CD4-positive, alpha-beta memory T cell (primary cell): ENCODE measurements at regions of chr1 and their contacts with region 1.

Region 1: DNA sequence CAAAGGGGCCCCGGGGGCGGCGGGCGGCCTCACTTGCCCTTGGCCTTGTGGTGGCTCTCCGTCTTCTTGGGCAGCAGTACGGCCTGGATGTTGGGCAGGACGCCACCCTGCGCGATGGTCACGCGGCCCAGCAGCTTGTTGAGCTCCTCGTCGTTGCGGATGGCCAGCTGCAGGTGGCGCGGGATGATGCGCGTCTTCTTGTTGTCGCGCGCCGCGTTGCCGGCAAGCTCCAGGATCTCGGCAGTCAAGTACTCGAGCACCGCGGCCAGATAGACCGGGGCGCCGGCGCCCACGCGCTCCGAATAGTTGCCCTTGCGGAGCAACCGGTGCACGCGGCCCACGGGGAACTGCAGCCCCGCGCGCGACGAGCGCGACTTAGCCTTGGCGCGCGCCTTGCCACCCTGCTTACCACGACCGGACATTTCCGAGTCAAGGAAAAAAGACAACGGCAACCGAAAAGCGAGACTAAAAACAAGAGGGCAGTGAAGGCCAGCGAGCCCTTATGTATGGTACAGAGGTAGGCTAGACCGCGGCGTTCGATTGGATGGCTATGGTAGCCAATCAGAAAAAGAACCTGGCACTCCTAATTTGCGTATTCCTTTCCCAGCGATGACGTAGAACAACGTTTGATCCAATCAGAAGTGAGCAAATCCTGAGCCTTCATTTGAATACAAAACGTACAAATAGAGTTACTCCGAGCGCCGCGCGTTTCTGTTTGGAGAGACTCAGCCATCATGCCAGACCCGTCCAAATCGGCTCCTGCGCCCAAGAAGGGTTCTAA is 29.6 kb upstream of the RNF187 start:
- DNase-seq: peak; percentile 92 to 96 (median 94)
- H3K4me3 ChIP-seq: peak overlapping the region; percentile 67 to 86
- H3K4me3 Mint-ChIP-seq: peak overlapping the region; percentile 94 to 100 (median 96)
- H3K27ac ChIP-seq: peak overlapping the region; percentile 82
- H3K27ac Mint-ChIP-seq: peak overlapping the region; percentile 99 to 100 (median 99)
- H3K4me1 ChIP-seq: peaks cover 30% of the 10 kb centered on the region
- H3K4me1 Mint-ChIP-seq: peaks cover 30 to 64% (median 45%) of the 10 kb centered on the region in 4 donors
- H3K27me3 ChIP-seq: no peaks in the 10 kb centered on the region
- H3K27me3 Mint-ChIP-seq: peaks cover 0 to 5% of the 10 kb centered on the region in 2 donors

Region 2: DNA sequence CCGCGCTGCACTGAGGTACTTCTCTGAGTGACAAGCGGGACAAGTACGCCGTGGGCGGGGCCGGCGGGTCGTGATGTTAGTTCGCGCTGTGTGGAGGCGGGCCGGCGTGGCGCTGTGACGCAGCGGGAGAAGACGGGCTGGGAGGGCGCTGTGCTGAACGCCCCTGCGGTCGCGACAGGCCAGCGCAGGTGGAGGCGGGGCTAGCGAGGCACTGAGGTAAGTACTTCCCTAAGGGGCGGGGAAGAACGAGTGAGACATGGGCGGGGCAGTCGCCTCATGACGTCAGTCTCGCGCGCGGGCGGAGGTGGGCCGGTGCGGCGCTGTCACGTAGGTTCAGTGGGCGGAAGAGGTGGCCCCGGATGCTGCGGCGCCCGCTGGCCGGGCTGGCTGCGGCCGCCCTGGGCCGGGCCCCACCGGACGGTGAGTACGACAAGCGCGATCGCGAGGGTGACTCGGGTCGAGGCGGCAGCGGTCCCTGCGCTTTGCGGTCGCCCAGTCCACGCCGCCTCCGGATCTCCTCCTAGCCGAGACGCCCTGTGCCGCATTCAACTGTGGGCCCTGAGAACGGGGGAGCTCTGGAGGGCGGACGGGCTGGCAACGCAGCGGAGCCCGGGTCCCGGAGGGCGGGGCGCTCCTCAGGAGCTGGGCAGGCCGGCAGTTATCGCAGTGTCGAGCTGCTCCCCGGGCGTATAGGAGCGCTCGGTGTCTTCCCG is 317.5 kb before region 1 on chr1 and contains the start of gene GUK1:
- CTCF ChIA-PET with region 1: no interaction called
- POLR2A ChIA-PET with region 1: interaction called, 17 read pairs
- intact Hi-C with region 1: loop called (anchors 1 kb)
- DNase-seq: peak; percentile 100
- H3K4me3 ChIP-seq: peak within 1 kb of the TSS; percentile 94 to 99
- H3K4me3 Mint-ChIP-seq: peak within 1 kb of the TSS; percentile 92 to 97 (median 96)
- H3K27ac ChIP-seq: peak within 1 kb of the TSS; percentile 98
- H3K27ac Mint-ChIP-seq: peak within 1 kb of the TSS; percentile 91 to 100 (median 100)
- H3K4me1 ChIP-seq: peaks cover 47% of the 10 kb centered on the region
- H3K4me1 Mint-ChIP-seq: peaks cover 14 to 47% (median 35%) of the 10 kb centered on the region in 4 donors
- H3K27me3 ChIP-seq: no peaks in the 10 kb centered on the region
- H3K27me3 Mint-ChIP-seq: peaks cover 0 to 7% of the 10 kb centered on the region in 2 donors
- total RNA-seq, gene GUK1: 179 to 185 TPM

Region 3: GRCh38 chr1:228275739-228276421 is 181.7 kb before region 1 on chr1:
- CTCF ChIA-PET with region 1: interaction called, 3 read pairs
- POLR2A ChIA-PET with region 1: interaction called, 17 read pairs
- intact Hi-C with region 1: loop called (anchors 1 kb)
- DNase-seq: peak; percentile 83 to 90 (median 85)
- H3K4me3 ChIP-seq: peak overlapping the region; percentile 36 to 62
- H3K4me3 Mint-ChIP-seq: peak overlapping the region; percentile 79 to 86 (median 82)
- H3K27ac ChIP-seq: peak overlapping the region; percentile 53
- H3K27ac Mint-ChIP-seq: peak overlapping the region; percentile 41 to 86 (median 60)
- H3K4me1 ChIP-seq: peaks cover 8% of the 10 kb centered on the region
- H3K4me1 Mint-ChIP-seq: peaks cover 4 to 19% (median 11%) of the 10 kb centered on the region in 4 donors
- H3K27me3 ChIP-seq: no peaks in the 10 kb centered on the region
- H3K27me3 Mint-ChIP-seq: no peaks in the 10 kb centered on the region

Region 4: DNA sequence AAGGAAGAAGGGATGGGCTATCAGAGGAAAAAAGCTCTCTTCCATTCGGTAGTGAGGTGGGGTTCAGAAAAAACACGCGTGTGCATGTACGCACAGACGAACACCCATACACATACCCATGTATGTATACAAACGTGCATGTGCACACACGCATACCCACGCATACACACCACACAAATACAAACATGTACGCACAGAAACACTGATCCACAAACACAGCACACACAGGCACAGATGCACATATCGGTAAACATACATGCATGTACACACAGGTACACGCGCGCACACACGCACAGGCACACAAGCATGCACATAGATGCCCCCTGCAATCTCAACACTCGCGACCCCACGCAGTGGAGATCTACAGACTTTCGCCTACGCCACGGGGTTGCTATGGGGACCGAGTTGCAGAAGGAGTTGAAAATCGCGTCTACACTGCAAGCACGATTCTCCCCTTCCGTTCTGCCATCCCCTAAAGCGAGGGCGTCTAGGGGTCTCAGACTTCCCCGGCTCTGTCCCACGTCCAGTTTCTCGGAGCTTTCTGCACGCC is 41.8 kb before region 1 on chr1:
- CTCF ChIA-PET with region 1: interaction called, 3 read pairs
- POLR2A ChIA-PET with region 1: interaction called, 10 read pairs
- intact Hi-C with region 1: no loop called
- DNase-seq: peak in 1 of 5 donors; percentile 8
- H3K4me3 ChIP-seq: peak overlapping the region in 1 of 2 donors; percentile 24
- H3K4me3 Mint-ChIP-seq: peak overlapping the region; percentile 50 to 81 (median 60)
- H3K27ac ChIP-seq: no peak overlapping the region
- H3K27ac Mint-ChIP-seq: peak overlapping the region in 5 of 7 donors; percentile 7 to 74 (median 36)
- H3K4me1 ChIP-seq: peaks cover 18% of the 10 kb centered on the region
- H3K4me1 Mint-ChIP-seq: peaks cover 12 to 21% (median 18%) of the 10 kb centered on the region in 4 donors
- H3K27me3 ChIP-seq: no peaks in the 10 kb centered on the region
- H3K27me3 Mint-ChIP-seq: peaks cover 2 to 8% of the 10 kb centered on the region in 2 donors

Region 5: DNA sequence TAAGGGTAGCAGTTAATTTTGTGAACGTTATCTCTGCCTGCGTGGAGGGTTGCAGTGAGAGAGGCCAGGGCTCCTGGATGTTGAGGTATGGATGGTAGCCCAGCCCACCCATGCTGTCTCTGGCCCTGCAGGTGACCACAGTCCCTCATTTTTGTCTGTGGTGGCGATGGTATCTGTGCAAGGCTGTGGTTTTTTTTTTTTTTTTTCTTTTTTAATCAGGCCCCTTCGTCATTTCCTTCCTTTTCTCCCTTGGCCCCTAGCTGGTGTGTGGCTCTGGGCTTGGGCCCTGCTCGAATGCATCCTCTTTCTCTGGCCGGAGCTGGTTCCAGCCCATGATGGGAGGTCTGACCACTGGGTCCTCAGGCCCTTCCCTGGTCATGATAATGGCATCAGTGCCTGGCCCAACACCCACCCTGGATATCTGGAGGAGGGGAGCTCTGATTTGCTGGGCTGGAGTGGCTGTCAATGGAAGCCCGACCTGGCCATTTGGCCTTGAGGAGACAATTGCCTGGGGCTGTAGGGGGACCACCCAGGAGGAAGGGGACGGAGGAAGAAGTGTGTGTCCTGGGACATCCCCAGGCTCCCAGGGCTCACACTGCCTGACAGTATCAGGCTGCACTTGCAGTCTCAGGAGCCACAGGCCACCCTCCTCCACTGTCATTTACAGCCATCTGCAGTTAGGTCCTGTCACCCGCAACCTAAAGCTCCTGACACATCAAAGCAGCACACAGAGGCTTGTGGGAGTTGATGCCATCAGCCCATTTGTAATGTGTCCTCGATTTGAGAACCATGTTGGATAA is 21.5 kb after region 1 on chr1:
- CTCF ChIA-PET with region 1: interaction called, 5 read pairs
- POLR2A ChIA-PET with region 1: interaction called, 12 read pairs
- intact Hi-C with region 1: no loop called
- DNase-seq: peak in 1 of 5 donors; percentile 40
- H3K4me3 ChIP-seq: peak overlapping the region in 1 of 2 donors; percentile 21
- H3K4me3 Mint-ChIP-seq: peak overlapping the region in 7 of 8 donors; percentile 48 to 87 (median 74)
- H3K27ac ChIP-seq: no peak overlapping the region
- H3K27ac Mint-ChIP-seq: peak overlapping the region; percentile 41 to 89 (median 83)
- H3K4me1 ChIP-seq: peaks cover 22% of the 10 kb centered on the region
- H3K4me1 Mint-ChIP-seq: peaks cover 15 to 34% (median 26%) of the 10 kb centered on the region in 4 donors
- H3K27me3 ChIP-seq: no peaks in the 10 kb centered on the region
- H3K27me3 Mint-ChIP-seq: no peaks in the 10 kb centered on the region

Region 6: GRCh38 chr1:228500901-228501871 is 43.6 kb after region 1 on chr1:
- CTCF ChIA-PET with region 1: interaction called, 14 read pairs
- POLR2A ChIA-PET with region 1: interaction called, 15 read pairs
- intact Hi-C with region 1: no loop called
- DNase-seq: peak; percentile 83 to 87 (median 83)
- H3K4me3 ChIP-seq: peak overlapping the region in 1 of 2 donors; percentile 44
- H3K4me3 Mint-ChIP-seq: peak overlapping the region; percentile 62 to 89 (median 80)
- H3K27ac ChIP-seq: no peak overlapping the region
- H3K27ac Mint-ChIP-seq: peak overlapping the region in 5 of 7 donors; percentile 6 to 83 (median 72)
- H3K4me1 ChIP-seq: peaks cover 15% of the 10 kb centered on the region
- H3K4me1 Mint-ChIP-seq: peaks cover 13 to 29% (median 20%) of the 10 kb centered on the region in 4 donors
- H3K27me3 ChIP-seq: no peaks in the 10 kb centered on the region
- H3K27me3 Mint-ChIP-seq: peaks cover 0 to 2% of the 10 kb centered on the region in 2 donors